Natural killer cell (primary cell): ENCODE measurements at regions of chr6 and their contacts with region 1.

Region 1: GRCh38 chr6:6407071-6407741 is 86.7 kb upstream of the F13A1 start:
- DNase-seq: peak in 1 of 2 donors; percentile 7
- ATAC-seq: peak in 2 of 3 donors; percentile 26 to 46
- H3K4me3 ChIP-seq: no peak overlapping the region
- H3K4me3 Mint-ChIP-seq: no peak overlapping the region
- H3K27ac ChIP-seq: no peak overlapping the region
- H3K27ac Mint-ChIP-seq: no peak overlapping the region
- H3K4me1 ChIP-seq: no peaks in the 10 kb centered on the region
- H3K4me1 Mint-ChIP-seq: no peaks in the 10 kb centered on the region
- H3K27me3 ChIP-seq: no peaks in the 10 kb centered on the region
- H3K27me3 Mint-ChIP-seq: peaks cover 7 to 23% of the 10 kb centered on the region in 2 donors
- CTCF ChIP-seq: no peak

Region 2: GRCh38 chr6:6331946-6332601 is 75.1 kb before region 1 on chr6:
- intact Hi-C with region 1: loop called (anchors 2 kb)
- DNase-seq: no peak
- ATAC-seq: no peak
- H3K4me3 ChIP-seq: no peak overlapping the region
- H3K4me3 Mint-ChIP-seq: no peak overlapping the region
- H3K27ac ChIP-seq: peak overlapping the region; percentile 23
- H3K27ac Mint-ChIP-seq: no peak overlapping the region
- H3K4me1 ChIP-seq: peaks cover 5% of the 10 kb centered on the region
- H3K4me1 Mint-ChIP-seq: no peaks in the 10 kb centered on the region
- H3K27me3 ChIP-seq: no peaks in the 10 kb centered on the region
- H3K27me3 Mint-ChIP-seq: peaks cover 5 to 16% of the 10 kb centered on the region in 2 donors
- CTCF ChIP-seq: no peak

Region 3: DNA sequence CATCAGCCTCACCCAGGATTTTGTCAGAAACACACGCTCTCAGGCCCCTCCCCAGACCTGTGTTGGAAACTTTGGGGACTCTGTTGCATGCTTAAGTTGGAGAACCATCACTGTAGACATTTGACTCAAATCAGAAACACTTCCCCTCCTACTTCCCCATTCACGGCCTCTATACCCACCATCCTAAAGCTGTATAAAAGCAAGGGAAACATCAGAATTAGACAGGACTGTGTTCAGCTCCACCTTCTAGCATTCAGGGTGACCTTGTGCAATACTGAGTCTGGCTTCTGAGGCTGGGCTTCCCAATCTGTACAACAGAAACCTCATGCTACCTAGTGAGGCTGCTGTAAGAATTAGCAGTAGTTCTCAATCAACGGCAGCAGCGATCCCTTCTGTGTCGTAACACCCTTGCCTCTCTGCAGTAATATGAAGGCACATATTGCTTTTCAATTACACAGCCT is 433.7 kb after region 1 on chr6:
- intact Hi-C with region 1: no loop called
- DNase-seq: no peak
- ATAC-seq: peak in 1 of 3 donors; percentile 30
- H3K4me3 ChIP-seq: no peak overlapping the region
- H3K4me3 Mint-ChIP-seq: no peak overlapping the region
- H3K27ac ChIP-seq: no peak overlapping the region
- H3K27ac Mint-ChIP-seq: no peak overlapping the region
- H3K4me1 ChIP-seq: peaks cover 12% of the 10 kb centered on the region
- H3K4me1 Mint-ChIP-seq: peaks cover 5 to 14% of the 10 kb centered on the region in 2 donors
- H3K27me3 ChIP-seq: no peaks in the 10 kb centered on the region
- H3K27me3 Mint-ChIP-seq: peaks cover 0 to 7% of the 10 kb centered on the region in 2 donors
- CTCF ChIP-seq: no peak